Activated B cell treated with CpG ODN at 0.5 μM for 24 hours (primary cell): ENCODE measurements at regions of chr9 and their contacts with region 1.

Region 1: DNA sequence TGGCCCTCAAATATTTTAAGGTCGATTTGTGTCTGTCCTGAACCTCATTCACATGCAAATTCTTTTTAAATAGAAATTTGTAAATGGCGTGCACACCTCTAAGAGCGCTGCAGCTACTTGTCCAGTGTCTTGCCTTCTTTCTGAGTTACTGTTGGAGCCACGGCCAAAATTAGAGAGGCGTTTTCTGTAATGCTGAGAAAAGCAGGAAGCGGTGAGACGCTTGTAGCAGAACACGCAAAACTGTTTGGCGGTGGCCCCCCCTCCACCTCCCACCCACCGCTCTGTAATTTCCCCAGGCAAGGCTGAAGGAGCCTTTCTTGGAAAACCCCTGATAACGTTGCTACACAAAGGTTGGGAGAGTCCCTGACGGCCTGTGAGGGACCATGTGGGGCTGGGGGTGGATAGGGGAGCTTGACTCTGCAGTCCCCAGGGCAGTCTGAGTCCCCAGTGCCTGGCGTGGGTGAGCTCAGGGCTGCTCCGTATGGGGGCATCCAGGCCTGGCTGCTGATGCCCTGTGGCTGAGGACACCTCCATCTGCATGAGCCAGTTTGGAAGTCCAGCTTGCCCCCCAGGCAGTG is 96.5 kb downstream of the GADD45G start:
- DNase-seq: peak; percentile 54
- ATAC-seq: peak; percentile 97
- H3K4me3 Mint-ChIP-seq: peak overlapping the region; percentile 66
- H3K27ac Mint-ChIP-seq: peak overlapping the region; percentile 57
- H3K4me1 Mint-ChIP-seq: peaks cover 39% of the 10 kb centered on the region
- H3K27me3 Mint-ChIP-seq: no peaks in the 10 kb centered on the region
- CTCF ChIP-seq: no peak

Region 2: DNA sequence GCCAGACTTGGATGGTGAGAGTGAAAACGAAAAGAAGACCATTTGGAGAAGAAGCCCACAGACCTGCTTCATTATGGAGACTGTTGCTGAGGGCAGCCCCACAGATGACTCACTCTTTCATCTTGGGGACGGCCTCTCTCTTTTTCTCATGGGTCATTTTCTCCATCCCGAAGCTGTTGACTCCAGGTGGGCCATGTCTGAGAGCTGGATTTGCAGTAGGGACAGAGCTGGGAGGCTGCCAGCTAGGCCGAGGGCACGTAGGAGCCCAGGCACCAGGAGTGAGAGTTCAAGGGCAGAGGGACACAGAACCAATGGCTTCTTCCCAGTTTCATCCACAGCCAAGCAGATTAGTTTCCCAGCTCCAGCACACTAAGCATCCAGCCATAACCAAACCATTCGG is 617.7 kb before region 1 on chr9:
- CTCF ChIA-PET with region 1: no interaction called
- POLR2A ChIA-PET with region 1: no interaction called
- intact Hi-C with region 1: no loop called
- DNase-seq: no peak
- ATAC-seq: no peak
- H3K4me3 Mint-ChIP-seq: no peak overlapping the region
- H3K27ac Mint-ChIP-seq: no peak overlapping the region
- H3K4me1 Mint-ChIP-seq: peaks cover 4% of the 10 kb centered on the region
- H3K27me3 Mint-ChIP-seq: peaks cover 13% of the 10 kb centered on the region
- CTCF ChIP-seq: no peak

Region 3: GRCh38 chr9:89722712-89723111 is 21.4 kb after region 1 on chr9:
- CTCF ChIA-PET with region 1: no interaction called
- POLR2A ChIA-PET with region 1: interaction called, 10 read pairs
- intact Hi-C with region 1: no loop called
- DNase-seq: no peak
- ATAC-seq: no peak
- H3K4me3 Mint-ChIP-seq: no peak overlapping the region
- H3K27ac Mint-ChIP-seq: no peak overlapping the region
- H3K4me1 Mint-ChIP-seq: peaks cover 3% of the 10 kb centered on the region
- H3K27me3 Mint-ChIP-seq: no peaks in the 10 kb centered on the region
- CTCF ChIP-seq: no peak

Region 4: GRCh38 chr9:89781838-89782517 is 80.7 kb after region 1 on chr9:
- CTCF ChIA-PET with region 1: no interaction called
- POLR2A ChIA-PET with region 1: interaction called, 3 read pairs
- intact Hi-C with region 1: loop called (anchors 1 kb)
- DNase-seq: peak; percentile 33
- ATAC-seq: peak; percentile 99
- H3K4me3 Mint-ChIP-seq: peak overlapping the region; percentile 32
- H3K27ac Mint-ChIP-seq: peak overlapping the region; percentile 54
- H3K4me1 Mint-ChIP-seq: peaks cover 23% of the 10 kb centered on the region
- H3K27me3 Mint-ChIP-seq: no peaks in the 10 kb centered on the region
- CTCF ChIP-seq: no peak

Region 5: DNA sequence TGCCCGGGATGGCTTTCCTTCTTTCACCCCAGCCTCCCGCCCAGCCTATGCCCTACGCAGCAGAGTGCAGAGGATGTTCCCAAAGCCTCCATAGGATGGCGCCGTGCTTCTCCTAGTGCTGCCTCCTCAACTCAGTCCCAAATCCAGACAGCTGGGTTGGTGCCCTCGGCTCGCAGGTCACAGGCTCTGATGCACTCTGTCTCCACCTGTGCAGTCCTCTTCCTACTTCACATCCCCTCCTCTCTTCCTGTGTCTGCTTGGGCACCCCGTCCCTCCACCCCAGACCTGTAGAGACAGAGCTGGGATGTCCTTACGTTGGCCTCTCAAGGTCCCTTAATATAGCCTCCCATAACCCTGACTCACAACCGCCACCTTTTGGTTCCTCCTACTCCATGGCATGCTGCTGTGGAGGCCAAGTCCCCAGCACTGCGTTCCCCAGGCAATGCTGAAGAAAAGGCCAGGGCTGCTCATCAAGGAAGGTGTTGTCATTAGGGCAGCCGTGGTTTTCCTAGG is 217.9 kb after region 1 on chr9:
- CTCF ChIA-PET with region 1: no interaction called
- POLR2A ChIA-PET with region 1: no interaction called
- intact Hi-C with region 1: loop called (anchors 1 kb)
- DNase-seq: no peak
- ATAC-seq: peak; percentile 82
- H3K4me3 Mint-ChIP-seq: no peak overlapping the region
- H3K27ac Mint-ChIP-seq: no peak overlapping the region
- H3K4me1 Mint-ChIP-seq: peaks cover 8% of the 10 kb centered on the region
- H3K27me3 Mint-ChIP-seq: peaks cover 3% of the 10 kb centered on the region
- CTCF ChIP-seq: no peak

Region 6: GRCh38 chr9:90795871-90796317 is 1094.6 kb after region 1 on chr9:
- CTCF ChIA-PET with region 1: no interaction called
- POLR2A ChIA-PET with region 1: no interaction called
- intact Hi-C with region 1: loop called (anchors 10 kb)
- DNase-seq: no peak
- ATAC-seq: peak; percentile 56
- H3K4me3 Mint-ChIP-seq: peak overlapping the region; percentile 50
- H3K27ac Mint-ChIP-seq: peak overlapping the region; percentile 89
- H3K4me1 Mint-ChIP-seq: peaks cover 72% of the 10 kb centered on the region
- H3K27me3 Mint-ChIP-seq: no peaks in the 10 kb centered on the region
- CTCF ChIP-seq: no peak